Dendritic cell treated with granulocyte-macrophage colony-stimulating factor and Interleukin-4, amounts not matched to agents 40 ng/mL and 50 ng/mL, for 4 days (primary cell): ENCODE measurements at regions of chr10 and their contacts with region 1.

Region 1: DNA sequence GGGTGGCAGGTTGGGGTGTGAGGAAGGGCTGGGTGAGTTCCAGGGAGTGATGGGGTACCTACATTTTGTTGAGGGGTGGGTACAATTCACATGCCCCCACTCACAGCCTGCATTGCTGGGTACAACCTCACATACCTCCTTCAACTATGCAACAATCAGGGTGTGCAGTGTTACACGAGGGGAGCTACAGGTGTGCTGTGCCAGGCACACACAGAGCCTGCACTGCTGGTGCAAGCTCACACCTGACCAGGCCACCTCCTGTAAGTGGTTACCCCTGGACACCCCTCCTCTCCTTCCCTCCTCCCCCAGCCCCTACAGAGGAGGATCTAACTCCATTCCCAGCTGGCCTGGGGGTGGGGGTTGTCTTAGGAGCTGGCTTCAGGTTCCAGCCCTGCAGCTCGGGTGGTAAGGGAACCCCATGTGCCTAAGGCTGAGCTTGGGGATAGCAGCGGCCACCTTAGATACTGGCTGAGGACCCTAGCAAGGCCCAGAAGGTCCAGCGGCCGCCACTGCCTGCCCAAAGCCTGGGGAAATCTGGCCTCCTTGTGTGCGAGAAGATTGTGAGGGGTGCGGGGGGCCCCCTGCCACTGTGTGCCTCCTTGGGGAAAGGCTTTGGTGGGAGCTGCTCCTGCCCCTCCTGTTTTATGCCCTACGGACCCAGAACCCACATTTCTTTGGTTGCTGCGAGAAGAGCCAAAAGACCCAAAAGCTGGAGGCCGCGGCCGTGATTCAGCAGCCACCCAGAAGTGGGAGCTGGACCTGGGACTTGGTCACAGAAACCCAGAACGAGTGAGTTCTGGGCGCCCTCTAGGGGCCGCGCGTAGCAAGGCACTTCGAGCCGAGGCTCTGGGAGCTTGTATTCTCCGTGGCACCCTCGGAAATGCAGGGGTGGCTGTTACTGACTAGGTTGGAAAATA is 10.8 kb downstream of the TLX1 start:
- H3K4me3 Mint-ChIP-seq: no peak overlapping the region
- H3K27ac Mint-ChIP-seq: no peak overlapping the region
- H3K4me1 Mint-ChIP-seq: peaks cover 27% of the 10 kb centered on the region
- H3K27me3 Mint-ChIP-seq: peaks cover 100% of the 10 kb centered on the region

Region 2: DNA sequence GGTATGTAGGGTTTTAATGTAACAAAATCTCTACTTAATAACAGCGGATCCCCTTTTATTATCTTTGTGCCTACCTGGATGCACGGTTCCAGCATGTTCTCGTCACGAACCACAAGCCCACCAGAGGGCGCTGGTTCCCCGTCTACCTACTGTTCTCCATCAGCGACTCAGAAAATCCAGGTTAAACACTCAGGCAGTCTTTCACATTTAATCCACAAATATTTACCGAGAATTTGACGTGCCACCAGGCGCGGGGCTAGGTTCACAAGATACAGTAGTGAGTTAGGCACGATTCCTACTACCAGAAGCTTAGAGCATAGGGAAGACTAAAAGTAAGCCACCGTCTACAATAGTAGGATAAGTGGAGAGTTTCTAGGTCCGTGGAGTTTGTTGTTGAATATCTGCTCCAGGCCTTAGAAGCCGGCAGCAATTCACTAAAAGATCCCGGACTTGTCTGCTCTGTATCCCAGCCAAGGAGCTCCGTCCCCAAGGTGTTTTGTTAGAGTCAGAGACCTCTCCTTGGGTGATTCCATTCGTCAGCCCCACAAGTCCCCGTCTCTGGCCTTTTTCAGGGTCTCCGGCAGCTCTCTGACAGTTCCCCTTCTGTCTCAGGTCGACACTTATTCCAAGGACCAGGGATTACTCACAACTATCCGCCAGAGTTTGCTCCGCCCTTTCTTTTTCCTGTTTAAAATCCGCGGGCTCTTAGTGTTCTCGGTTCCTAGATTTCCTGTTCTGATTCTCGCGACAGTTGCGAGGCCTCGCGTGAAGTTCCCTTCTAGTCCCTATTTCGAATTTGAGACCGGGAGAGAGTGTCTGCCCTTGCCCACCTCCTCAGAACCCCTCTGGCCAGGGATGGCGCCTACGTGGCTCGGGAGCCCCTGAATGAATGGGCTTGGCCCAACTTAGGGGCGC is 81.6 kb before region 1 on chr10:
- intact Hi-C with region 1: loop called (anchors 1 kb)
- H3K4me3 Mint-ChIP-seq: peak overlapping the region; percentile 86
- H3K27ac Mint-ChIP-seq: peak overlapping the region; percentile 95
- H3K4me1 Mint-ChIP-seq: peaks cover 54% of the 10 kb centered on the region
- H3K27me3 Mint-ChIP-seq: peaks cover 42% of the 10 kb centered on the region

Region 3: DNA sequence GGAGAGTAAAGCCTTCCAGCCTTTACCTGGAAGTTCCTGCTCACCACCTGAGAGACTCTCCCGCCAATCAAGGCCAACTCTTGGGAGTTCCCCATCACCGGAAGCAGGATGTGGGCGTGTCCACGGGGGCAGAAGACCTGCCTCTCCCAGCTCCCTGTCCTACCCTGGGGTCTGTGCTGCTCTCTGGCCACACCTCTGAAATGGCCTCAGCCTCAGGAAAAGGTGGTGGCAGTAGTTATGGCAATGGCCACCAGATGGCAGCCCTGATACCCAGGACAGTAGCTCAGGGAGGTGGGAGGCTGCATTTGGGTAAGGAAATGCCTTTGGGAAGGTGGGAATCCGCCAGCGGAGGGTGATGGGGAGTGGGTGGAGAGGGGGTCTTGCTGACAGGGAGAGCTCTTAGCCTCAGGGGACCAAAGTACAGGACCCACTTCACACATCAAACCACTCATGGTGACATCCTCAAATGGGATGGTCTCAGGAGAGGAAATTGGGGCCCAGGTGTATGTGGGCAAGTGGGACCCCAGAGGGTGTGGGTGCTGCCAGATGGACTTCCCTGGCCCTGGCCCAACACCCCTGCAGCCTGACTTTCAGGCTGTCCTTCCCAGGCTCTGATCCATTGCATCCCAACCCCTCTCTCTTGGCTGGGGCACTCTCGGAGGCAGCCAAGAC is 46.2 kb before region 1 on chr10:
- intact Hi-C with region 1: loop called (anchors 1 kb)
- H3K4me3 Mint-ChIP-seq: no peak overlapping the region
- H3K27ac Mint-ChIP-seq: no peak overlapping the region
- H3K4me1 Mint-ChIP-seq: peaks cover 5% of the 10 kb centered on the region
- H3K27me3 Mint-ChIP-seq: peaks cover 80% of the 10 kb centered on the region

Region 4: GRCh38 chr10:101107771-101108170 is 34.1 kb before region 1 on chr10:
- intact Hi-C with region 1: no loop called
- H3K4me3 Mint-ChIP-seq: no peak overlapping the region
- H3K27ac Mint-ChIP-seq: no peak overlapping the region
- H3K4me1 Mint-ChIP-seq: no peaks in the 10 kb centered on the region
- H3K27me3 Mint-ChIP-seq: peaks cover 80% of the 10 kb centered on the region